ENCODE measurements at regions of chr22 and their contacts with region 1.

Region 1: GRCh38 chr22:46693634-46694415 is 44.2 kb downstream of the CERK start:
- DNase-seq: no peak
- ATAC-seq: no peak
- H3K4me3 ChIP-seq: no peak overlapping the region
- H3K27ac ChIP-seq: no peak overlapping the region
- H3K4me1 ChIP-seq: peaks cover 0 to 12% (median 8%) of the 10 kb centered on the region in 9 donors
- H3K27me3 ChIP-seq: no peaks in the 10 kb centered on the region
- CTCF ChIP-seq: no peak

Region 2: DNA sequence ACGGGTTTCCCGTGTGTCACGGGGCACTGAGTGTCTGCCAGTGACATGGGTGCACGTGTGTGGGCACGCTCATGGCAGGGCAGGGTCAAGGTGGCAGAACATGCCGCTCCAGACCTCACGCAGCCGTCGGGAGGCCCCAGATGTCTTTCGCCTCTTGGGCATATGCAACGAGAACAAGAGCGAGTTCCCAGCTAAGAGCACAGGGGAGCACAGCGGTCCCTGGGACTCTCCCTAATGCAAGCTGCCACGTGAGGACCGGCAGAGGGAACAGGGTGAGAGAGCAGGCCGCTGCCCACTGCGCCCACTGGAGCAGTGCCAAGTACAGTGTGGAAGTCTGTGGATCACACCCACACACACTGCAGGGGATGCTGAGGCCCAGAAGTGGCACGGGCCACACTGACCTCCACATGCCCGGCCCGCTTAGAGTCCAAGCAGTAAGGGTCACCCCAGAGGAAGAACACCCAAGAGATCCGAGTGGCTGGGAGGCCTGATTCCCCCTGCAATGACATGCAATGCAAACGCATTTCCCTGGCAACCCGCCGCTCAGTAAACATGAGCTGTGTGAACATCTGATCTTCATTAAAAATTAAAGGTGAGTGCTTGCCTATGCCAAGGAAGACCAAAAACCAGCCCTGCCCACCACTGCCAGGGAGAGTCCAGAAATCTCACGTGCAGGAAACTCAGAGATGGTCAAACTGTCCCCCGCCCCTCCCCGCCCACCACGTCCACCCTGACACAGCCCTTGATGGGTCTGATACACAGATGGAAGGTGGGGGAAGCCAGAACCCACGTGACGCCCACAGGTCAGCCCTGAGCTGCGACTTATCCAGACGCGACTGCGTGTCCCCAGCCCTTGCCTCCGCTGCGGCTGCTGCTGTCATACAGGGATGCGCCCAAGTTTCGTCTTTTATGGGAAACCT is 32.5 kb after region 1 on chr22:
- intact Hi-C with region 1: loop called in 6 of 10 experiments (anchors 5 kb)
- DNase-seq: no peak
- ATAC-seq: peak in 6 of 8 donors; percentile 2 to 63 (median 32)
- H3K4me3 ChIP-seq: no peak overlapping the region
- H3K27ac ChIP-seq: peak overlapping the region in 7 of 10 donors; percentile 11 to 52 (median 32)
- H3K4me1 ChIP-seq: peaks cover 24 to 80% (median 70%) of the 10 kb centered on the region in 9 donors
- H3K27me3 ChIP-seq: no peaks in the 10 kb centered on the region
- CTCF ChIP-seq: no peak

Region 3: DNA sequence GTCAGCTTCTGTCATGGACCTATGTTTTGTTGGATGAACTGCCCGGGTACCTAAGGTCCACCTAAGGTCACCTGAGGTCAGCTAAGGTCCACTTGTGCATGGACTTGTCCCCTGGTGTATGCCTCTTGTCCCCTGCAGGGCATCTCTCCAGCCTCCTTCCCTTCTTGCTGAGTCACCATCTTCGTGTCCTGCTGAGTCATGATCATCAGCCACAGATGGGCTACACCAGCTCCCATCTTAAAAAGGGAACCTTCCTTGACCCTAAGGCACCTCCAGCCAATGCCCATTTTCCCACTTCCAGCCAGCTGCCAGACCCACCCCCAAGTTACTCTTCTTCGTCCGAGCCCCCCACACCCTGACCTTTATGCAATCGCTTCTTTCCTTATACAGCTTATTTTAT is 613.5 kb after region 1 on chr22:
- intact Hi-C with region 1: no loop called
- DNase-seq: no peak
- ATAC-seq: no peak
- H3K4me3 ChIP-seq: no peak overlapping the region
- H3K27ac ChIP-seq: no peak overlapping the region
- H3K4me1 ChIP-seq: no peaks in the 10 kb centered on the region
- H3K27me3 ChIP-seq: peaks cover 0 to 12% (median 0%) of the 10 kb centered on the region in 7 donors
- CTCF ChIP-seq: no peak

Measured in heart right ventricle (tissue), 16 donors.